ENCODE measurements at regions of chr3 and their contacts with region 1.

Region 1: DNA sequence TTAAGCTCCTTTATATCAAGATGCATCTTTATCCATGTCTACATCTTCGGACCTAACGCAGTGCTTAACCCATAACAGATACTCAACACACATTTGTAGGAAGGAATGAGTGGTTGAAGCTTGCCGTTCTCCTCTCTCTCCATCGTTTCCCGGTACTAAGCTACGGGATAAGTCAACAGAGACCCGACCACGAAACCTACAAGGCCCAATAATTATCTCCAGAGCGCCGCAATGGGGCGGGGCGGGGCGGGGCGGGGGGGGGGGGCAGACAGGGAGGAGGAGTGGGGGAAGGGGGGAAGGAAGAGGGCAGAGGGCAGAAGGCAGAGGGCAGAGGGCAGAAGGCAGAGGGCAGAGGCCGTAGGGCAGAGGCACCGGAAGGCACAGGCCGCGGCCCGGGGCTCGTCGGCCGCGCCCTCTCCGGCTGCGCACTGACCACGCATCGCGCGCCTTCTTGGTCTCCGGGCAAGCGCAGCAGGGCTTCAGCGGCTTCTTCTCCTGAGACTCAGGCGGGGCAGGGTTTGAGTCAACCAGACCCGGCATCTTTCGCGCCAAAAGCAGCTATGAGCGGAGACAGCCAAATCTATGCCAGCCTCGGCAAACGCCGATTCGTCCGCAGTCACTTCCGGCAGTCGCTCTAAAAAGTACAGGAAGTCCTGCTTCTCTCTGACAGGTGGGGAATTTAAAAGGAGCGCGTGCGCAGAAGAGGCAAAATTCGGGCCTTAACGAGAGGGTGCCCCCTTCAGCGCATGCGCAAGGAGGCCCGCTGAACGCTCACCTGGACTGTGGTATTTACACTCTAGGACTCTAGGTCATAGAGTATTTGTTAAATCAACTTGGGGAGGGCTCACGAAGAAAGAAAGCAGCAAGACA is at the start of gene COX17:
- DNase-seq: peak; percentile 82 to 95 (median 92)
- H3K4me3 ChIP-seq: peak within 1 kb of the TSS; percentile 57 to 89 (median 79)
- H3K27ac ChIP-seq: peak within 1 kb of the TSS; percentile 67 to 98 (median 93)
- H3K27me3 ChIP-seq: no peaks in the 10 kb centered on the region
- CTCF ChIP-seq: peak in 18 of 56 donors; percentile 9 to 47 (median 20)
- total RNA-seq, gene COX17: 24.5 to 55.4 (median 36.6) TPM

Region 2: GRCh38 chr3:119463171-119464169 is 213.5 kb before region 1 on chr3 and contains the start of gene TMEM39A:
- intact Hi-C with region 1: loop called (anchors 10 kb)
- DNase-seq: peak; percentile 98 to 100 (median 99)
- H3K4me3 ChIP-seq: peak within 1 kb of the TSS; percentile 74 to 100 (median 96)
- H3K27ac ChIP-seq: peak within 1 kb of the TSS; percentile 27 to 94 (median 88)
- H3K27me3 ChIP-seq: no peaks in the 10 kb centered on the region
- CTCF ChIP-seq: peak in 53 of 56 donors; percentile 4 to 64 (median 40)
- total RNA-seq, gene TMEM39A: 8.7 to 30.1 (median 18.3) TPM

Measured in dorsolateral prefrontal cortex (tissue), 120 donors.